Activated CD4-positive, alpha-beta T cell treated with anti-CD3 and anti-CD28 coated beads for 36 hours (primary cell): ENCODE measurements at regions of chr13 and their contacts with region 1.

Region 1: GRCh38 chr13:46168341-46168740 is 13.6 kb downstream of the LCP1 start:
- DNase-seq: peak; percentile 82
- ATAC-seq: peak; percentile 59
- H3K4me3 Mint-ChIP-seq: peak overlapping the region; percentile 67
- H3K27ac Mint-ChIP-seq: peak overlapping the region; percentile 85
- H3K4me1 Mint-ChIP-seq: peaks cover 95% of the 10 kb centered on the region
- H3K27me3 Mint-ChIP-seq: no peaks in the 10 kb centered on the region

Region 2: GRCh38 chr13:46146899-46147298 is 21.4 kb before region 1 on chr13:
- CTCF ChIA-PET with region 1: interaction called, 7 read pairs
- POLR2A ChIA-PET with region 1: interaction called, 15 read pairs
- intact Hi-C with region 1: no loop called
- DNase-seq: no peak
- ATAC-seq: no peak
- H3K4me3 Mint-ChIP-seq: no peak overlapping the region
- H3K27ac Mint-ChIP-seq: peak overlapping the region; percentile 63
- H3K4me1 Mint-ChIP-seq: peaks cover 36% of the 10 kb centered on the region
- H3K27me3 Mint-ChIP-seq: no peaks in the 10 kb centered on the region

Region 3: DNA sequence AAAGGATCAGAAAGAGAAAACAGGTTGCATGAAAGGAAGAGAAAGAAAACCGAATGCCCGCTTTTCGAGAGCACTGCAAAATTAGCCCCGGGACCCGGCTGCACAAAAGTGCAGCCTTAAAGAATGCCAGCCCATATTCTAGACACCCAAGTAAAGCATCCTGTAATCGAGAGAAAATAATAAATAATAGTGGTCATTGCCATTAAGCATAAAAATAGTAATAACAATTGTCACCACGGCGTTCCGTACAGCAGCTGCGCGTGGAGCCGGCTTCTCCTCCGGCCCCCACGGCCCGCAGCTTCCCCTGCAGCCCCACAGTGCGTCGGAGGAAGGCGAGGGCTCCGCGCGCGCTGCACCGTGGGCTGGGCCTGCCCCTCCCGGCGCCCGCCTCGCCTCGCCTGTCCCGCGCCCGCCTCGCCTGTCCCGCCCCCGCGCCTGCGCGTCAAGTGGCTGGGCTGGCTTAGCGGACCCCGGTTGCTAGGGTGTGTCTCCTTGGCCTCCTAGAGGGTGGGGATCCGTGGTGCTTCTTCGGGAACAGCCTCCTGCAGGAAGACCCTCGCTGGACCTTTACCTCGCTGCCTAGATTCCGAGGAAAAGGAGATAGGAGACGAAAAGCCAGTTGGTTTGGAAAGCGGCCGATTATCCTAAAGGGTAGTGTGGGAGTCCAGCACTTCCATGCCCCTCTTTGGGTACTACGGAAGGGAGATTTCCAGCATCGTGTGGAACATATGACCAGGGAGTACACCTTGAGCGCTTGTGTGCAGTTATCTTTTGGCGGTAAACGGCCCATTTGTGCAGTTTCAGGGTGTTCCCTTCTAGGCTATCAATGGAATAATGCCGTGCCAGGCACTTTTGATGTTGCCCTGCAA is 43.4 kb after region 1 on chr13 and contains the start of gene LRRC63:
- CTCF ChIA-PET with region 1: interaction called, 4 read pairs
- POLR2A ChIA-PET with region 1: no interaction called
- intact Hi-C with region 1: loop called in 1 of 2 experiments (anchors 5 kb)
- DNase-seq: peak; percentile 90
- ATAC-seq: peak; percentile 96
- H3K4me3 Mint-ChIP-seq: peak within 1 kb of the TSS; percentile 76
- H3K27ac Mint-ChIP-seq: peak within 1 kb of the TSS; percentile 88
- H3K4me1 Mint-ChIP-seq: peaks cover 23% of the 10 kb centered on the region
- H3K27me3 Mint-ChIP-seq: no peaks in the 10 kb centered on the region
- total RNA-seq, gene LRRC63: 0.50 to 0.67 TPM

Region 4: GRCh38 chr13:46295491-46296114 is 127.3 kb after region 1 on chr13:
- CTCF ChIA-PET with region 1: interaction called, 3 read pairs
- POLR2A ChIA-PET with region 1: no interaction called
- intact Hi-C with region 1: loop called in 1 of 2 experiments (anchors 2 kb)
- DNase-seq: peak; percentile 75
- ATAC-seq: peak; percentile 88
- H3K4me3 Mint-ChIP-seq: peak overlapping the region; percentile 44
- H3K27ac Mint-ChIP-seq: peak overlapping the region; percentile 95
- H3K4me1 Mint-ChIP-seq: peaks cover 60% of the 10 kb centered on the region
- H3K27me3 Mint-ChIP-seq: no peaks in the 10 kb centered on the region